Activated CD8-positive, alpha-beta T cell treated with anti-CD3 and anti-CD28 coated beads for 36 hours (primary cell): ENCODE measurements at regions of chr11 and their contacts with region 1.

Region 1: DNA sequence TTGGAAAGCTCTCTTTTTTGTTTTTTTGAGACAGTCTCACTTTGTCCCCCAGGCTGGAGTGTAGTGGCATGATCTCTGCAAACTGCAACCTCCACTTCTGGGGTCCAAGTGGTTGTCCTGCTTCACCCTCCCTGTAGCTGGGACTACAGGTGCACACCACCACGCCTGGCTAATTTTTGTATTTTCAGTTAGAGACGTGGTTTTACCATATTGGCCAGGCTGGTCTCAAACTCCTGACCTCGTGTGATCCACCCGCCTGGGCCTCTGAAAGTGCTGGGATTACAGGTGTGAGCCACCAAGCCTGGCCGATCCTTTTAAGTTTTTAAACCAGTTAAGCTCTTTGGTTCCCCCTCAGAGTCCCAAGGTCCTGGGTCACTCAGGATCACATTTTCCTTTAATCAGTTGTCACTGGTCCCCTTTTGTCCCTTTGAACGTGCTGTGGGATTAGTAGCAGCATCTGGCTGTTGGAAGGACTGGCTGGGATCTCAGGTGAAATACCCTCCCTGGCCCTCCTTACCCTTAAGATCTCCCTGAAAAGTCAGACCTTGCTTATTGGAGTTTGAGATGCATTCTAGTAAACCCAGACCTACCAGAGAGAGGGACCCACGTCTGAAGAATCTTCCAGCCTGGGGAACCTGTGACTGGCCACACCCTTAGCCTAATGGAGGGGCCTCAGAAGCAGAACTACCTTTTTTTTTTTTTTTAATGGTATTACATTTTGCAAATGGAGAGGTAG is 8.1 kb downstream of the MALAT1 start:
- DNase-seq: peak; percentile 68
- ATAC-seq: peak; percentile 57
- H3K4me3 Mint-ChIP-seq: no peak overlapping the region
- H3K27ac Mint-ChIP-seq: peak overlapping the region; percentile 73
- H3K4me1 Mint-ChIP-seq: peaks cover 46% of the 10 kb centered on the region
- H3K27me3 Mint-ChIP-seq: no peaks in the 10 kb centered on the region
- CTCF ChIP-seq: no peak

Region 2: DNA sequence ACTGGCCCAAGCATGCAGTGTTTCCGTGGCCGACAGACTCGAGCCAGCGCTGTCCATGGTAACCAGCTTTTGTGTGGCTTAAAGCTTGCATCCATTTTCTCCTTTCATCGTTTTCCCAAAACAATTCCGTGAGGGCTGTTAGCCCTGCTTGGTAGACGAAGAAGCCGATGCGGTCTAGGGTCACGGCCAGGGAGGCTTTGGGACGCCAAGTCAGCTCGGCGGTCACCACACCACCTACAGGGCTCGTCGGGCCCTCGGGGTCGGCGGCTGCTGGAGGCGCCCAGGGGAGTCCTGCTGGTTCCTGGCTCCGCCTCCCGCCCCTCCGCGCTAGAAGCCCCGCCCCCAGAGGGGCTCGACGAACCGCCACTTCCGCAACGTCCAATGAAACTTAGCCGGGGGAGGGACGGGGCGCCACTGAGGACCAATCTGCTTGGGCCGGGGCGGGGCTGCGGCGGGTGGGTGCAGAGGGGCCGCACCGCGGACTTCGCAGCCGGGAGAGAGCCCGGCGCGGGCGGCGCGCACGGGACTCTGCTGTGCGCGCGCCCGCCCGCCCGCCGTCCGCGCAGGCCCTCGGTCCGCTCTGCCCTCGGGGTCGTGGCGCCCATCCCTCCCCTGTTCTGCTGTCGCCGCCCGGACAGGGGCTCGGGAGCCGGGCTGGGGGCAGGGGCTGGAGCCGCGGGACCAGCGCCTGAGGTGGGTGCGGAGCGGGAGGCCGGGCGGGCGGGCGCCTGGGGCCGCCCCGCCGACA is 152.5 kb before region 1 on chr11 and contains the start of gene TIGD3:
- CTCF ChIA-PET with region 1: interaction called, 4 read pairs
- POLR2A ChIA-PET with region 1: interaction called, 14 read pairs
- intact Hi-C with region 1: no loop called
- DNase-seq: peak; percentile 99
- ATAC-seq: peak; percentile 99
- H3K4me3 Mint-ChIP-seq: peak within 1 kb of the TSS; percentile 82
- H3K27ac Mint-ChIP-seq: peak within 1 kb of the TSS; percentile 63
- H3K4me1 Mint-ChIP-seq: peaks cover 13% of the 10 kb centered on the region
- H3K27me3 Mint-ChIP-seq: no peaks in the 10 kb centered on the region
- CTCF ChIP-seq: no peak
- total RNA-seq, gene TIGD3: 0.65 to 1.4 TPM

Region 3: GRCh38 chr11:65425105-65425970 is 81.6 kb before region 1 on chr11:
- CTCF ChIA-PET with region 1: interaction called, 448 read pairs
- POLR2A ChIA-PET with region 1: interaction called, 4,842 read pairs
- intact Hi-C with region 1: loop called (anchors 2 kb)
- DNase-seq: peak; percentile 90
- ATAC-seq: peak; percentile 32
- H3K4me3 Mint-ChIP-seq: peak overlapping the region; percentile 89
- H3K27ac Mint-ChIP-seq: peak overlapping the region; percentile 98
- H3K4me1 Mint-ChIP-seq: peaks cover 41% of the 10 kb centered on the region
- H3K27me3 Mint-ChIP-seq: peaks cover 8% of the 10 kb centered on the region
- CTCF ChIP-seq: no peak

Region 4: GRCh38 chr11:65471410-65471762 is 35.6 kb before region 1 on chr11:
- CTCF ChIA-PET with region 1: interaction called, 13 read pairs
- POLR2A ChIA-PET with region 1: interaction called, 687 read pairs
- intact Hi-C with region 1: loop called (anchors 5 kb)
- DNase-seq: no peak
- ATAC-seq: no peak
- H3K4me3 Mint-ChIP-seq: peak overlapping the region; percentile 72
- H3K27ac Mint-ChIP-seq: peak overlapping the region; percentile 99
- H3K4me1 Mint-ChIP-seq: peaks cover 26% of the 10 kb centered on the region
- H3K27me3 Mint-ChIP-seq: no peaks in the 10 kb centered on the region
- CTCF ChIP-seq: peak; percentile 37

Region 5: GRCh38 chr11:65569973-65570918 is 63.3 kb after region 1 on chr11 and contains the start of gene ZNRD2:
- CTCF ChIA-PET with region 1: interaction called, 3 read pairs
- POLR2A ChIA-PET with region 1: interaction called, 11 read pairs
- intact Hi-C with region 1: no loop called
- DNase-seq: peak; percentile 99
- ATAC-seq: peak; percentile 77
- H3K4me3 Mint-ChIP-seq: peak within 1 kb of the TSS; percentile 93
- H3K27ac Mint-ChIP-seq: peak within 1 kb of the TSS; percentile 97
- H3K4me1 Mint-ChIP-seq: peaks cover 57% of the 10 kb centered on the region
- H3K27me3 Mint-ChIP-seq: no peaks in the 10 kb centered on the region
- CTCF ChIP-seq: peak; percentile 27
- total RNA-seq, gene ZNRD2: 54.3 to 54.7 TPM

Region 6: GRCh38 chr11:65672186-65672860 is 165.4 kb after region 1 on chr11:
- CTCF ChIA-PET with region 1: no interaction called
- POLR2A ChIA-PET with region 1: no interaction called
- intact Hi-C with region 1: no loop called
- DNase-seq: peak; percentile 17
- ATAC-seq: peak; percentile 71
- H3K4me3 Mint-ChIP-seq: no peak overlapping the region
- H3K27ac Mint-ChIP-seq: no peak overlapping the region
- H3K4me1 Mint-ChIP-seq: peaks cover 3% of the 10 kb centered on the region
- H3K27me3 Mint-ChIP-seq: no peaks in the 10 kb centered on the region
- CTCF ChIP-seq: no peak